Heart left ventricle (tissue), 16 donors: ENCODE measurements at regions of chrX and their contacts with region 1.

Region 1: DNA sequence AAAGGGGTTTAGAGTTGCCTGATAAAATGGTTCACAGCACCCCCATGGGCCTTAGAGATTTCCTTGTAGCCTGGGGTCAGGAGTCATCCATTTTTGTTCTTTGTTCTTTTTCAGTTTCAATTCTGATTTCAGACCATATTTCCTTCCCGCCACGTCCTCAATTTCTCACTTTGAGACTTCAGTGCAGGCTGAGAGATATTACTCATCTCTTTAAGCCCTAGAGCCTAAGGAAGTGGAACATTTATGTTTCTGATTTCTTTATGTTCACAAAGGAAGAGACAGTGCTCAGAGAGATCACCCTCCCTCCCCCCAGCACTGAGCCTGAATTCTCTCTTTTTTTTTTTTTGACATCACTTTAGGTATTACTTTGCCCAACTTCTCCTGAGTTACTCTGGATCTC is 56.3 kb downstream of the MSN start:
- DNase-seq: no peak
- ATAC-seq: peak in 1 of 4 donors; percentile 25
- H3K4me3 ChIP-seq: no peak overlapping the region
- H3K27ac ChIP-seq: peak overlapping the region in 3 of 12 donors; percentile 24 to 81 (median 37)
- H3K4me1 ChIP-seq: peaks cover 0 to 66% (median 17%) of the 10 kb centered on the region in 12 donors
- H3K27me3 ChIP-seq: peaks cover 0 to 6% (median 0%) of the 10 kb centered on the region in 9 donors
- CTCF ChIP-seq: no peak
- POLR2A ChIP-seq: no peak

Region 2: GRCh38 chrX:65706041-65706828 is 17.5 kb before region 1 on chrX:
- intact Hi-C with region 1: loop called in 1 of 10 experiments (anchors 2 kb)
- DNase-seq: peak; percentile 45 to 79 (median 61)
- ATAC-seq: peak; percentile 84 to 92 (median 86)
- H3K4me3 ChIP-seq: no peak overlapping the region
- H3K27ac ChIP-seq: peak overlapping the region; percentile 61 to 85 (median 78)
- H3K4me1 ChIP-seq: peaks cover 0 to 82% (median 50%) of the 10 kb centered on the region in 12 donors
- H3K27me3 ChIP-seq: no peaks in the 10 kb centered on the region
- CTCF ChIP-seq: no peak
- POLR2A ChIP-seq: no peak